ENCODE measurements at regions of chr7 and their contacts with region 1.

Region 1: DNA sequence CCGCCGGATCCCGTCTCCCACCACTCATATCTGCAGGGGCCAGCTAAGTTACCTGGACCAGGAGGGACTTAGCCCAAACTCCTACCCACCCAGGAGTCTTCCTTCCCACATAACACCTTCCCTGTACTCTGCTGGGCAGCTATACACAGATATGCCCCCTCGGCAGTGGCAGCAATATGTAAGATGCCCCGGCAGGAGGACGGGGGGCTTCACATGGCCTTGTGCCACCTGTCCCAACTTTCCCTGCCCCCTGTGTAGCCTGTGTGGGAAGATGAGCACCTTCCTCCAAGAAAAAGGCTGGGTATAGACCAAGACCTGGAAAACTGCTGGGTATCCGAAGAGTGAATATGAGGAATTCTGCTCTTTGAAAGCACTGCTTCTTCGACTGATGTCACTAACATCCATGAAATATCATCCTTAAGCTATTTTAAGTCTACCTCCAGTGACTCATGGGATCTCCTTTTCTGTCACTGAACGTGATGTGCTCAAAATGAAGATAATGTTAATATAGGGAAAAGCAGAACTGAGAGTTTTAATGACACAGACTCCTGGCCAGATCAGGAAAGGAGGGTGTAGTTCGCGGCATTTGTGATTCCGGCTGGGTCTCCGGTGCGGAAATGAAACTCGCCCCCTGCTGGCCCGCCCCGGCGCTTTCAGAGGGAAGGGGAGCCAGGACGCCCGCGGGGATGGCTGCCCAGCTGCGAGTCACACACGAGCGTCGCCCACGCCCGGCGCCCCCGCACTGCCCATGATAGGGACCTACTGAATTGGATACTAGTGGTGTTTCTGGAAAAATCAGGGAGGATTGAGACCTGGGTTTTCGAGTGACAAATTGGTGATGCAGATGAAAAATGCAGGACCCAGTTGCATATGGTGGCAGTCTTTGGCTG is 256.9 kb upstream of the NFE2L3 start:
- DNase-seq: peak; percentile 40 to 85 (median 69)

Region 2: DNA sequence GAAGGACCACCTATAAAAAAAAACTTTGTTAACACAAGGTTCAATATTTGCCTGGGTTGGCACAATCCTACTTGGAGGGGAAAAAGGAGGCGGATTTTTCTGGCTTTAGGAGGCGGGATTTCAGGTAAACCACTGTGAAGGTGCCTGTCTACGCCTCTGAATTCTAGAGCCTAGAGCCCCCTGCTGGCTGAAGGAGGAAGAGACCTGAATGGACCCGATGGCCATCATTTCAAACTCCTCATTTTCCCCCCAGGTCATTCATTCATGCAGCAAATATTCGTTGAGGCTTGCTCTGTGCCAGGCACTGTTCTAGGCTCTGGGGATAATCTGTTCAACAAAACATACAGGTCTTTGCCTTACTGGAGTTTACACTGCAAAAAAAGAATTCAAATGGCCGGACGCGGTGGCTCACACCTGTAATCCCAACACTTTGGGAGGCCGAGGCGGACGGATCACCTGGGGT is 166.6 kb after region 1 on chr7:
- intact Hi-C with region 1: loop called (anchors 5 kb)
- DNase-seq: peak in 41 of 42 donors; percentile 8 to 81 (median 57)

Measured in head of caudate nucleus (tissue), 42 donors.